Calu3 (cell line): ENCODE measurements at regions of chr1 and their contacts with region 1.

Region 1: DNA sequence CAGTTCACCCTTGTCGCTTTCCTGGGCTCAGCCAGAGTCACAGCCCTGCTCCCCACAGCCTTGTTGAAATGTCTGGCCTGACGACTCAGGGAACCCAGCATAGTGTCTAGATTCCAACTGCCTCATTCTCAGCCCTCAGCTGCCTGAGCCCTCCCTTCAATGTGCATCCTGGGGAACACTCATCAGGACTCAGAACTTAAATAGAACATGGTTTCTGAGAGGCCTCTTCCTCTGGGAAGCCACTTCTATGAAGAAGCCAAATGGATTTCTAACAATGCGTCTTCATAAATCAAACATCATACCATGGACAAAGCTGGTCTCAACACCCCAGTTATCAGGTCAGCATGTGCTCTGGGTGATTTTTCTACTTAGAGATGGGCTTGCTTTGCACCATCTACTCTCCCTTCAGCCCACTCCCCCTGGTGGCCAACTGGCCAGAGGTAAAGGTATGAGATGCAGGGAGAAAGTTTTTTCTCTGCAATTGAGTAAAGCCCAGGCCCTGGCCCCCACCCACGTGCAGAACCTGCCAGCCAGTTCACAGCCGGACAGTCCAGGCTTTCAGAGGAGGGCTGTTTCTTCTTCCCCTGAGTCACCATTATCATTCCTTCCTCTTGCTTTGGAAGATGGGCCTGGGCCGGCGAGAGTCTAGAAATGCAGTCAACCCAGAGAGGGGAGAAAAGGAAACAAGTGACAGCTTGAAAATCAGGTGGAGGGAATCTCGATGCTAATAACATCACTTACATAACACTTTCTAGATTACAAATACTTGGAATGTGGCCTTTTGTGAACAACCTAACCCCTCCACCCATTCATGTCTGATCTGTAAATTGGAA is 32.1 kb downstream of the CD244 start:
- DNase-seq: peak; percentile 94
- H3K4me3 Mint-ChIP-seq: no peak overlapping the region
- H3K27ac Mint-ChIP-seq: no peak overlapping the region
- H3K4me1 Mint-ChIP-seq: peaks cover 46% of the 10 kb centered on the region
- H3K27me3 Mint-ChIP-seq: peaks cover 28% of the 10 kb centered on the region
- CTCF ChIP-seq: peak; percentile 91

Region 2: GRCh38 chr1:160675641-160676410 is 154.7 kb before region 1 on chr1:
- CTCF ChIA-PET with region 1: no interaction called
- intact Hi-C with region 1: loop called (anchors 5 kb)
- DNase-seq: peak; percentile 73
- H3K4me3 Mint-ChIP-seq: no peak overlapping the region
- H3K27ac Mint-ChIP-seq: no peak overlapping the region
- H3K4me1 Mint-ChIP-seq: no peaks in the 10 kb centered on the region
- H3K27me3 Mint-ChIP-seq: peaks cover 46% of the 10 kb centered on the region
- CTCF ChIP-seq: peak; percentile 58

Region 3: DNA sequence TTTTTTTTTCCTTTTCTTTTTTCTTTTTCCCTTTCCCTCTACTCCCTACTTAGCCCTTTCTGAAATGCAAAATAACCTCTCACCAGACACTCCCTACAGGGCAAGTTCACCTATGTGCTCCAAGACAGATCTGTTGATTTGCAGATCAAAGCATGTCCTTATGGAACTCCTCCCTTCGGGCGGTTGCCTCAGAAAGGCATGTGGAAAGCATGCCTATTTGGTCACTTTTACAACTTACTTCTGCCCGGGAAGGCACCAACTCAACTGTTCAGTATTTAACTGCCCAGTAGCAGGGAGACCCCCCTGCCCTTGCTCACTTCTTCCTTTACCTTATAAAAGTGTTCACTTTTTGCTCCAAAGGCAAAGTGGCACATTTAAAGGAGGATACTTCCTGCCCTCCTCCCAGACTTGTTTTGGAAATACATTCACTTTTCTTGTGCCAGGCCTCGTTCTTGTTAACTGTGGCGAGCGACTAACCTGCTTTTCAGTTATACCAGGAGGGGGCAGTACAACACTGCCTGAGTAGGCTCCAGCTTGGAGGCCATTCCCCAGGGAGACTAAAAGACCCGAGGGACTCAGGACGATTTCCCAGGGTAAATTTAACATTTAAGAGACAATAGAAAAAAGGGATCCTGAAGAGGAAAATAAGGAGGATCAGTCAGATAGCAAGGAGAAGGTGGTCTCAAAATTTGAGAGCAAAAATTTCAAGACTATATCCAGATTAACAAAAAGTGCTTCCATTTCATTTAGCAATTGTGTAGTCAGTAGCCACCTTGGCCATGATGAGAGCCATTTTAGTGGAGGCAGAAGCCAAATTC is 103.8 kb before region 1 on chr1:
- CTCF ChIA-PET with region 1: interaction called, 11 read pairs
- intact Hi-C with region 1: loop called (anchors 1 kb)
- DNase-seq: peak; percentile 78
- H3K4me3 Mint-ChIP-seq: no peak overlapping the region
- H3K27ac Mint-ChIP-seq: no peak overlapping the region
- H3K4me1 Mint-ChIP-seq: no peaks in the 10 kb centered on the region
- H3K27me3 Mint-ChIP-seq: peaks cover 16% of the 10 kb centered on the region
- CTCF ChIP-seq: peak; percentile 91

Region 4: GRCh38 chr1:160777486-160778089 is 52.9 kb before region 1 on chr1:
- CTCF ChIA-PET with region 1: interaction called, 13 read pairs
- intact Hi-C with region 1: loop called (anchors 1 kb)
- DNase-seq: peak; percentile 58
- H3K4me3 Mint-ChIP-seq: no peak overlapping the region
- H3K27ac Mint-ChIP-seq: no peak overlapping the region
- H3K4me1 Mint-ChIP-seq: peaks cover 24% of the 10 kb centered on the region
- H3K27me3 Mint-ChIP-seq: no peaks in the 10 kb centered on the region
- CTCF ChIP-seq: peak; percentile 68

Region 5: DNA sequence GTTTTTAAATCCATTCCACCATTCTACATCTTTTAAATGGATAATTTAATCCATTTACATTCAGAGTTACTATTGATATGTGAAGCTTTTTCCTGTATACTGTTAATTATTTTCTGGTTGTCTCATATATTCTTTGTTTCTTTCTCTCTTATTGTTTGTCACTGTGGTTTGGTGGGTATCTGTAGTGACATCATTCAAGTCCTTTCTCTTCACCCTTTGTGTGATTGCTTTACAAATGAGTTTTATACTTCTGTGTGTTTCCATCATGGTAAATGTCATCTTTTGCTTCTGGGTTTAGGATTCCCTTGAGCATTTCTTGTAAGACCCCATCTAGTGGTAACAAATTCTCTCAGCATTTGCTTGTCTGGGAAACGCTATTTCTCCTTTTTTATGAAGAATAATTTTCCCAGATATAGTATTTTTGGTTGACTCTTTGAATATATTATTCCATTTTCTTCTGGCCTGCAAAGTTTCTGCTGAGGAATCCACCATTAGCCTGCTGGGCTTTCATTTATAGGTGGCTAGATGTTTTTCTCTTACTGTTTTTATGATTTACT is 24.4 kb before region 1 on chr1:
- CTCF ChIA-PET with region 1: interaction called, 3 read pairs
- intact Hi-C with region 1: loop called (anchors 2 kb)
- DNase-seq: no peak
- H3K4me3 Mint-ChIP-seq: no peak overlapping the region
- H3K27ac Mint-ChIP-seq: no peak overlapping the region
- H3K4me1 Mint-ChIP-seq: peaks cover 7% of the 10 kb centered on the region
- H3K27me3 Mint-ChIP-seq: no peaks in the 10 kb centered on the region
- CTCF ChIP-seq: no peak

Region 6: GRCh38 chr1:160907976-160908375 is 77.4 kb after region 1 on chr1:
- CTCF ChIA-PET with region 1: no interaction called
- intact Hi-C with region 1: loop called (anchors 10 kb)
- DNase-seq: no peak
- H3K4me3 Mint-ChIP-seq: no peak overlapping the region
- H3K27ac Mint-ChIP-seq: no peak overlapping the region
- H3K4me1 Mint-ChIP-seq: peaks cover 17% of the 10 kb centered on the region
- H3K27me3 Mint-ChIP-seq: peaks cover 72% of the 10 kb centered on the region
- CTCF ChIP-seq: no peak

Region 7: GRCh38 chr1:160942926-160943325 is 112.4 kb after region 1 on chr1:
- CTCF ChIA-PET with region 1: interaction called, 11 read pairs
- intact Hi-C with region 1: no loop called
- DNase-seq: peak; percentile 41
- H3K4me3 Mint-ChIP-seq: no peak overlapping the region
- H3K27ac Mint-ChIP-seq: no peak overlapping the region
- H3K4me1 Mint-ChIP-seq: peaks cover 16% of the 10 kb centered on the region
- H3K27me3 Mint-ChIP-seq: peaks cover 36% of the 10 kb centered on the region
- CTCF ChIP-seq: no peak